Activated CD8-positive, alpha-beta memory T cell treated with anti-CD3 and anti-CD28 coated beads, Interleukin-2, amount 10 ng/mL, durations not matched to agents 7 days and 5 days (primary cell): ENCODE measurements at regions of chr19 and their contacts with region 1.

Region 1: GRCh38 chr19:860481-861101 is 1.1 kb downstream of the CFD start:
- DNase-seq: peak; percentile 60
- ATAC-seq: peak; percentile 28
- H3K4me3 Mint-ChIP-seq: no peak overlapping the region
- H3K27ac Mint-ChIP-seq: no peak overlapping the region
- H3K4me1 Mint-ChIP-seq: peaks cover 16% of the 10 kb centered on the region
- H3K27me3 Mint-ChIP-seq: peaks cover 13% of the 10 kb centered on the region

Region 2: DNA sequence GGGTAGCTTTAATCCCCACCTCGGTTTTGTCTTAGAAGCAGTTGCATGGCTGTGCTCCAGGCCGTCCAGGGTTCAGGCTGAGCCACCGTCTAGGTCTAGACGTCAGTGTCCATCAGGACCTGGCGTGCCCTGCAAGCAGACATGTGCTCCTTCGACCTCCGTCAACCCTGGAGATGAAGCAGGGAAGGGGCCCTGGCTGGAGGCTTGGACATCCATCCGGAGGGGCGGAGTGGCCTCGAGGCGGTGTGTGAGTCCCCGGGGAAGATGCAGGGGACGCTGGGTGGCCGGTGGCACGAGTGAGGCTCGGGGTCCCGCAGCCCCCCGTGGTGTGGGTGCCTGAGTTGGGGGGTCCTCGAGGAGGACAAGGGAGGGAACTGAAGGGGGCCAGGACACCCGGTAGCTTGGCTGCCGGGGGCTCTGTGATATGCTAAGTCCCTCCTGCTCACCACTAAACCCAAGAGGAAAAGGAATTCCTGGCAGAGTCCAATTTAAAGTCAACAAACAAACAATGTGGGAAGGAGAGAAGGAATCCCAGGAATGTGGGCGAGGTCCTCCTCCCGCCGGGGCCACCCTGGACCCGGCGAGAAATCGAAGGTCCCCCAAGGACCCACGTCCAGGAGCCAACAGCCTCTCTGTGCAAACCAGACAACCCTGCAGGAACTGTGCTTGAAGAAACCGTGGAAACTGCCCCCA is 78.3 kb before region 1 on chr19:
- CTCF ChIA-PET with region 1: no interaction called
- DNase-seq: no peak
- ATAC-seq: no peak
- H3K4me3 Mint-ChIP-seq: no peak overlapping the region
- H3K27ac Mint-ChIP-seq: no peak overlapping the region
- H3K4me1 Mint-ChIP-seq: no peaks in the 10 kb centered on the region
- H3K27me3 Mint-ChIP-seq: no peaks in the 10 kb centered on the region

Region 3: GRCh38 chr19:892243-893050 is 31.9 kb after region 1 on chr19:
- CTCF ChIA-PET with region 1: interaction called, 24 read pairs
- DNase-seq: no peak
- ATAC-seq: peak; percentile 63
- H3K4me3 Mint-ChIP-seq: peak overlapping the region; percentile 75
- H3K27ac Mint-ChIP-seq: peak overlapping the region; percentile 98
- H3K4me1 Mint-ChIP-seq: peaks cover 23% of the 10 kb centered on the region
- H3K27me3 Mint-ChIP-seq: no peaks in the 10 kb centered on the region

Region 4: DNA sequence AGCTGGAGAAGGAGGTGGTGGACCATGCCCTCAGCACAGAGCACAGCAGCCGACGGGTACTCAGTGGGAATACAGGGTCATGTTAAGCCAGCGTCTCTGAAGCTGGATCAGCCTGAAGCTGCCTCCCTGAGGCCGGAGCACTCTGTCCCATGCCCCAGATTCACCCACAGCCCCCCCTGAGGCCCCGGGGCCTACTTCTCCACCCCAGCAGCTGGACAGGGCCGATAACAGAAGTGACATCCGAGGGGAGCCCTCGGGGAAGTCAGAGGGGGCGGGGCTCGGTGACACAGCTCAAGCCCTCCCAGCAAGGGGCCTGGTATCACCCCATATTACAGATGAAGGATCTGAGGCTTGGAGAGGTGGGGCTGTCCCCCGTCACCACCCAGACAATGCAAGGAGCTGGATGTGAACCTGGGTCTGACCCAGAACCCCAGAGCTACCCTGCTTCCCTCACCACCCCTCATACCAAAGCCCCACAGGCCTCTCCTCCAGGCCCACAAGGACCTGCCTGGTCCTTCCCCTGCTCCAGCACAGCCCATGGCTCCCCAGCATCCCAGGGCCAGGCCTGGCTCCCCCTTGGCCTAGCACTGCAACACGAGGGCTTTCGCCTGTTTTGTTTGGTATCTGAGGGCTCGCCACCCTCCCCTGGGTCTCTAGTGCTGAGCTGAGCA is 46.7 kb after region 1 on chr19:
- CTCF ChIA-PET with region 1: interaction called, 57 read pairs
- DNase-seq: no peak
- ATAC-seq: no peak
- H3K4me3 Mint-ChIP-seq: no peak overlapping the region
- H3K27ac Mint-ChIP-seq: peak overlapping the region; percentile 98
- H3K4me1 Mint-ChIP-seq: peaks cover 43% of the 10 kb centered on the region
- H3K27me3 Mint-ChIP-seq: no peaks in the 10 kb centered on the region

Region 5: DNA sequence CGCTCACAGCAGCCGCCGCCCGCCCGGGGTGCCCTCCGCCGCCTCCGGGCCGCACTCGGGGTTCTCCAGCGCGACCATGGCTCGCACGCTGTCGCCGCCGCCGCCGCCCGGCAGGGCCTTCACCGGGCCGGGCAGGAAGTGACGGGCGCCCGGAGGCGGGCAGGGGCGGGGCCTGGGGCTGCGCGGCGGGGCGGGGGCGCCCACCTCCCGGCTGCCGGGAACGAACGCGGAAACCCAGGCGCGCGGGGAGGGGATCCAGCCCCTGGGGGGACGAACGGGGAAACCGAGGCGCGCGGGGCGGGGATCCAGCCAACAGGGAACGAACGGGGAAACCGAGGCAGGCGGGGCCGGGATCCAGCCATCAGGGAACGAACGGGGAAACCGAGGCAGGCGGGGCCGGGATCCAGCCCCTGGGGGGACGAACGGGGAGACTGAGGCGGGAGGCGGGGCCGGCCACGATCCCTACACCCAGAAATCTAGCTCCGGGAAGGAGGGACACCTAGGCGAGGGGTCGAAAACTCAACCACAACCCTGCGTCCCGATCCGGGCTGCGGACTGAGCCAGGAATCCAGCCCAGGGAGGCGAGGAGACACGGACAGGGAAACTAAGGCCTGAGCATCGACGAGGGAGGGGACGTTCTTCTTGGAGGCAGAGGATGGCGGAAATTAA is 52.6 kb after region 1 on chr19 and contains the start of gene R3HDM4:
- CTCF ChIA-PET with region 1: interaction called, 85 read pairs
- DNase-seq: peak; percentile 86
- ATAC-seq: peak; percentile 73
- H3K4me3 Mint-ChIP-seq: peak within 1 kb of the TSS; percentile 78
- H3K27ac Mint-ChIP-seq: peak within 1 kb of the TSS; percentile 84
- H3K4me1 Mint-ChIP-seq: peaks cover 32% of the 10 kb centered on the region
- H3K27me3 Mint-ChIP-seq: peaks cover 2% of the 10 kb centered on the region
- total RNA-seq, gene R3HDM4: 63.7 to 73.7 TPM

Region 6: DNA sequence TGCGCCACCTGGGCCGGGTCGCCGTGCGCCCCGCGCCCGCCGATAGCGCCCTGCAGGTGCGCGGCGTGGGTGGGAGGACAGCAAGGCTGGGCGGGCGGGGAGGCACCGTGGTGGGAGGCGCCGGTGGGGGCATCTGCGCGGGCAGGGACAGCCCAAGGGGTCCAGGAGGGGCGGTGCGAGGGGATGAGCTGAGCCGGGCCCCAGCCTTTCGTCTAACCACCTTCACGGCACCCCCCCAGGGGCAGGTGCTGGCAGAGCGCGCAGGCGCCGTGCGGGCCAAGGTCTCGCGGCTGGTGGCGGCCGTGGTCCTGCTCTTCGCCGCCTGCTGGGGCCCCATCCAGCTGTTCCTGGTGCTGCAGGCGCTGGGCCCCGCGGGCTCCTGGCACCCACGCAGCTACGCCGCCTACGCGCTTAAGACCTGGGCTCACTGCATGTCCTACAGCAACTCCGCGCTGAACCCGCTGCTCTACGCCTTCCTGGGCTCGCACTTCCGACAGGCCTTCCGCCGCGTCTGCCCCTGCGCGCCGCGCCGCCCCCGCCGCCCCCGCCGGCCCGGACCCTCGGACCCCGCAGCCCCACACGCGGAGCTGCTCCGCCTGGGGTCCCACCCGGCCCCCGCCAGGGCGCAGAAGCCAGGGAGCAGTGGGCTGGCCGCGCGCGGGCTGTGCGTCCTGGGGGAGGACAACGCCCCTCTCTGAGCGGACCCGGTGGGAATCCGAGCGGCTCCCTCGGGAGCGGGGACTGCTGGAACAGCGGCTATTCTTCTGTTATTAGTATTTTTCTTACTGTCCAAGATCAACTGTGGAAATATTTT is 59.7 kb after region 1 on chr19:
- CTCF ChIA-PET with region 1: interaction called, 85 read pairs
- DNase-seq: peak; percentile 71
- ATAC-seq: peak; percentile 31
- H3K4me3 Mint-ChIP-seq: peak overlapping the region; percentile 75
- H3K27ac Mint-ChIP-seq: peak overlapping the region; percentile 68
- H3K4me1 Mint-ChIP-seq: peaks cover 20% of the 10 kb centered on the region
- H3K27me3 Mint-ChIP-seq: peaks cover 9% of the 10 kb centered on the region

Region 7: DNA sequence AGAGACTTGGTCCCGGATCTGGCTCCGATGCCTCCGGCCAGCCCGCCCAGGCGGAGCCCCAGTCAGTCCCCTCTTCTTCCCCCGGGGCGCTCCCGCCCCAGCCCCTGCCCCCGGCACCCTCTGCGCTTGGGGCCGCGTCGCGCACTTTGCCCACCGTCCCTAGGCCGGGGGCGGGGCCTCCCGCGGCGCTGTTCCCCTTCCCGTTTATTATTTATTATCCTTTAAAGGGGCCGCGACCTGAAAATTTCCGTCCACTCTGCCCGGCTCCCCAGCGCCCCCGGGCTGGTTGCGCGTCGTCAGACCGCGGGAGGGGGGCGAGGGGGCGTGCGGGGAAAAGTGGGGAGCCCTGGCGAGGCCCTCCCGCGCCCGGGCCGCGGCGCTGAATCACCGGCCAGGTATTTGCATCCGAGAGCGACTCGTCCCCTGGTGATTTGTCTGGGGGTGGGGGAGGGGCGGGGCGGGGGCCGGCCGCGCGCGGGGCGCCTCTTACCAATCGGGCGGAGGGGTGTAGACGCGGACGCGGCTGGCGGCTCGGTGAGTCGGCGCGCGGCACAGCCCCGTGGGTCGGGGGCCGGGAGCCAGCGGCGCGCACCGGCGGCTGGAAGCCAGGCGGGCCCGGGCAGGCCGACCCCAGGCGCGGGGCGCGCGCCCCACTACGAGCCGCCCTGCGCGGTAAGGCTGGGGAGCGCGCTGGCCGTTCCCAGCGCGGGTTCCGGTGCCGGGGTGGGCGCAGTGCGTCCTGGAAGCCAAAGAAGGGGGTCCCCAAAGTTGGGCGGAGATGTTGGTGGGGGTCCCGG is 65.1 kb after region 1 on chr19 and contains the start of gene ARID3A:
- CTCF ChIA-PET with region 1: interaction called, 85 read pairs
- DNase-seq: peak; percentile 82
- ATAC-seq: peak; percentile 68
- H3K4me3 Mint-ChIP-seq: peak within 1 kb of the TSS; percentile 77
- H3K27ac Mint-ChIP-seq: peak within 1 kb of the TSS; percentile 75
- H3K4me1 Mint-ChIP-seq: peaks cover 17% of the 10 kb centered on the region
- H3K27me3 Mint-ChIP-seq: no peaks in the 10 kb centered on the region
- total RNA-seq, gene ARID3A: 30.6 to 35.9 TPM

Region 8: GRCh38 chr19:947265-948036 is 86.9 kb after region 1 on chr19:
- CTCF ChIA-PET with region 1: no interaction called
- DNase-seq: no peak
- ATAC-seq: no peak
- H3K4me3 Mint-ChIP-seq: no peak overlapping the region
- H3K27ac Mint-ChIP-seq: no peak overlapping the region
- H3K4me1 Mint-ChIP-seq: peaks cover 4% of the 10 kb centered on the region
- H3K27me3 Mint-ChIP-seq: no peaks in the 10 kb centered on the region

Region 9: DNA sequence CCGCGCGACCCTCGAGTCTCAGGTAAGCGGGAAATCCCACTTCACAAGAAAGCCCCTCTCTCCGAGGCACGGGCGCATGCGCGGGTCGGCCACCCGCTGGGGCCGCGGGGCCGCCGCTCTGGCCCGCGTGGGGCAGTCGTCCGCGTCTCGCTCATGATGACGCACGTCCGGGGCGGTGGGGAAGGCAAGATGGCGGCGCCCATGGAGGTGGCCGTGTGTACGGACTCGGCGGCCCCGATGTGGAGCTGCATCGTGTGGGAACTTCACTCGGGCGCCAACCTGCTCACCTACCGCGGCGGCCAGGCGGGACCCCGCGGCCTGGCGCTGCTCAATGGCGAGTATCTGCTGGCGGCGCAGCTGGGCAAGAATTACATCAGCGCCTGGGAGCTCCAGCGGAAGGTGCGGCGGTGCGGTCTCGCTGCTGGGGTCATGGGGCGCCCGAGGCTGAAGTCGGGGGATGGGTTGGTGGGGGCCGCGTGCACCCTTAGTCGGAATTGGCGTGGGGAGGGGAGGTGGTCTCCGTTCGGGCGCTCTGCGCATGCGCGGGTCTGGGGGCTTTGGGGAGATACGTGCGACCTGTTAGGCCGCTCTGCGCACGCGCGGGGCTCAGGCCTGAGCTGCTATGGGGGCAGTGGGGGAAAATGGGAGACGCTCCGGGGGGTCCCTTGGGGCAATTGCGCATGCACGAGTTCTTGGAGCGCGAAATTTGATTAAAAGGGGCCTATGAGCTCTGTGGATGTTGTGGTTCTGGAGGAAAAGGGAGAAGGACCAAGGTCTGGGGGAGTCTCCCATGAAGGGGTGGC is 123.8 kb after region 1 on chr19 and contains the start of gene WDR18:
- CTCF ChIA-PET with region 1: interaction called, 36 read pairs
- DNase-seq: peak; percentile 94
- ATAC-seq: peak; percentile 93
- H3K4me3 Mint-ChIP-seq: peak within 1 kb of the TSS; percentile 90
- H3K27ac Mint-ChIP-seq: peak within 1 kb of the TSS; percentile 89
- H3K4me1 Mint-ChIP-seq: peaks cover 29% of the 10 kb centered on the region
- H3K27me3 Mint-ChIP-seq: no peaks in the 10 kb centered on the region
- total RNA-seq, gene WDR18: 64.5 to 87.9 TPM